ENCODE measurements at regions of chr9 and their contacts with region 1.

Region 1: GRCh38 chr9:69376651-69377050 is 51.6 kb downstream of the ENTREP1 start:
- DNase-seq: peak in 1 of 2 donors; percentile 73
- ATAC-seq: peak; percentile 86
- H3K4me3 ChIP-seq: no peak overlapping the region
- H3K27ac ChIP-seq: no peak overlapping the region
- H3K4me1 ChIP-seq: peaks cover 3 to 12% of the 10 kb centered on the region in 2 donors
- H3K27me3 ChIP-seq: no peaks in the 10 kb centered on the region

Region 2: GRCh38 chr9:69019808-69020207 is 356.8 kb before region 1 on chr9:
- intact Hi-C with region 1: no loop called
- DNase-seq: no peak
- ATAC-seq: no peak
- H3K4me3 ChIP-seq: no peak overlapping the region
- H3K27ac ChIP-seq: no peak overlapping the region
- H3K4me1 ChIP-seq: no peaks in the 10 kb centered on the region
- H3K27me3 ChIP-seq: no peaks in the 10 kb centered on the region

Region 3: GRCh38 chr9:69044240-69045219 is 332.1 kb before region 1 on chr9:
- intact Hi-C with region 1: loop called in 1 of 2 experiments (anchors 10 kb)
- DNase-seq: no peak
- ATAC-seq: no peak
- H3K4me3 ChIP-seq: no peak overlapping the region
- H3K27ac ChIP-seq: no peak overlapping the region
- H3K4me1 ChIP-seq: no peaks in the 10 kb centered on the region
- H3K27me3 ChIP-seq: no peaks in the 10 kb centered on the region

Region 4: DNA sequence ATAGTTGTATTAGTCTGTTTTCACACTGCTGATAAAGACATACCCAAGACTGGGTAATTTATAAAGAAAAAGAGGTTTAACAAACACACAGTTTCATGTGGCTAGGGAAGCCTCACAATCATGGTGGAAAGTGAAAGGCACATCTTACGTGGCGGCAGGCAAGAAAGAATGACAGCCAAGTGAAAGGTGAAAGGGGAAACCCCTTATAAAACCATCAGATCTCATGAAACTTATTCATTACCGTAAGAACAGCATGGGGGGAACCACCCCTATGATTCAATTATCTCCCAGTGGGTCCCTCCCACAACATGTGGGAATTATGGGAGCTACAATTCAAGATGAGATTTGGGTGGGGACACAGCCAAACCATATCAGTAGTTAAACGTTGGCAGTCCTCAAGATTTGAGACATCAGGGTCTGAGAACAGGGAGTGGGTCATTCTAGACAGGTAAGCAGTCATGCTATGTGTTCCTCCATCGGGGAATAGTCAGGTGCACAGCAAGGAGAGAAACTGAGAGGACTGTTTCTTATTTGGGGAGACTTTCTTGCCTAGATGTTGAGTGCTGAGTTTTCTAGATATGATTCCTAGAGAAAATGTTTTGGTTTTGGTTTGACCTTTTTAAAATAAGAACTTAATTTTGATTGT is 97.4 kb before region 1 on chr9:
- intact Hi-C with region 1: no loop called
- DNase-seq: no peak
- ATAC-seq: no peak
- H3K4me3 ChIP-seq: no peak overlapping the region
- H3K27ac ChIP-seq: no peak overlapping the region
- H3K4me1 ChIP-seq: no peaks in the 10 kb centered on the region
- H3K27me3 ChIP-seq: no peaks in the 10 kb centered on the region

Region 5: DNA sequence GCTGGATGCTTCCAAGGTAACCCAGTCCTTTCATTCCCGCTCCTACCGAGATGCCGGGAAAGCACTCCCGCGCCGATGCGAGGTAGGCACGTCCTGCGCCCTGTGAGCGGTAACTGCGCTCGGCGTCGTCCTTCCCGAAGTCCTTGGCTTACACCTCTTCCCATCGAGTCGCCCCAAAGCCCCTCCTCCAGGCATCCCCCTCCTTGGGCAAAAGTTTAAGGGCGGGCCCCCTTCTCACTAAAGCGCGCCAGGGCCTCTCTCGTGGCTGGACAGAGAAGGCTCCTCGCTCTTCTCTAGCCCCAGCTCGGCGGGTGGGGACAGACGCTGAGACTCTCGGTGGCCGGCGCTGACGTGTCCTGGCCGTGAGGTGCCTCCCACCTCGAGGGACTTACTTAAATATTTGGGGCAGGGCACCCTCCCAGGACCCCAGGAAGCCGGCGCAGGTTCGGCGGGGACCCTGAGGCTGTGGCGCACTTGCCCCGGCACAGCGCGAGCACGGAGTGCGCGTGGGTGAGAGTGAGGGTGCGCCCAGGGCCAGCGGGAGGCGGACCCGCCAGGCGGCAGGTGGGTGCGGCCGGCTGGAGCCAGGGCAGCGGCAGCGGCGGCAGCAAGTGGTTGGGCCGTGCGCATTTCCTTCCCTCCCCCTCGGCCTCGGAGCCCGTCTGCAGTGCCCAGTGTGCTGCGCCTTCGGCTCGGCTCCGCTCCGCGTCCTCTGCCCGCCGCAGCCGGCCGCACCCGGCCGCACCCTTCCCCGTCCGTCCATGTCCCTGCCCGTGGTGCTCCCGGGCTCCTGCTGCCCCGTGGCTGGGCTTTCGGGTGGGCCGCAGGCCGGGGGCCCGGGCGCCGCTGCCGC is 51.9 kb before region 1 on chr9 and contains the start of gene ENTREP1:
- intact Hi-C with region 1: loop called in 1 of 2 experiments (anchors 10 kb)
- DNase-seq: peak; percentile 76 to 89
- ATAC-seq: peak; percentile 92
- H3K4me3 ChIP-seq: peak within 1 kb of the TSS; percentile 67 to 74
- H3K27ac ChIP-seq: no peak within 1 kb of the TSS
- H3K4me1 ChIP-seq: no peaks in the 10 kb centered on the region
- H3K27me3 ChIP-seq: no peaks in the 10 kb centered on the region
- total RNA-seq, gene ENTREP1: 2.8 to 5.7 TPM

Measured in aorta (tissue), 5 donors.